Activated CD4-positive, alpha-beta memory T cell treated with anti-CD3 and anti-CD28 coated beads for 36 hours (primary cell): ENCODE measurements at regions of chr11 and their contacts with region 1.

Region 1: GRCh38 chr11:119728651-119729580 is at the start of gene NECTIN1:
- DNase-seq: peak; percentile 89
- H3K4me3 Mint-ChIP-seq: peak within 1 kb of the TSS; percentile 76
- H3K27ac Mint-ChIP-seq: peak within 1 kb of the TSS; percentile 28
- H3K4me1 Mint-ChIP-seq: peaks cover 16% of the 10 kb centered on the region
- H3K27me3 Mint-ChIP-seq: peaks cover 13% of the 10 kb centered on the region
- total RNA-seq, gene NECTIN1: 2.0 to 2.4 TPM

Region 2: DNA sequence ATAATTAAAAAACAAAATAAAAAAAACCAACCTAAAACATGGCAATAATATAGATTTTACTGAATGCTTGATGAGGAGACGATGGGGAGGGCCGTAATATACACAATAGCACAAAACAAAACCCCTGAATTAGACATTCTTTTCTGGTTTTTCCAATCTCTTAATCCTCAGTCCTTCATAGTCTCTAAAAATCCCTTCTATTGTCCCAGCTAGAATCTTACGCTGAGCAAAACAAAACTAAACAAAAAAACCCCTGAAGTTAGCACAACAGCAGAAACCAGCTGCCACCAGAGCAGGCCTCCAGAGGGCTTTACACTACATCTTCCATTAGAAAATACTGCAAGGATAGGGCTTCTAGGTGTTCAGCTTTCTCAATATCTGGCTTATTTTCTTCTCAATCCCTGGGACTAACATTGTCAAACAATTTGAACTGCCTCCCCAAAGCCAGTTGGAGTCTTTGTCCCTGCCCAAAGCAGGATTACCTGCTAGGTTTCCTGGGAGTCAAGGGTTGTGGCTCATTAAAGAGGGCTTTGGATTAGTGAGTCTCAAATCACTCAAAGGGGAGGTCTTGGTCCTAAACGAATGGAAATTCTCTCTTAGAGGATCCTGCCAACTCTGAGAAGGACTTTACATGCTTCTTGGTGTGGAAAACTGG is 396.7 kb before region 1 on chr11:
- CTCF ChIA-PET with region 1: no interaction called
- POLR2A ChIA-PET with region 1: no interaction called
- intact Hi-C with region 1: no loop called
- DNase-seq: no peak
- H3K4me3 Mint-ChIP-seq: no peak overlapping the region
- H3K27ac Mint-ChIP-seq: no peak overlapping the region
- H3K4me1 Mint-ChIP-seq: peaks cover 20% of the 10 kb centered on the region
- H3K27me3 Mint-ChIP-seq: no peaks in the 10 kb centered on the region

Region 3: GRCh38 chr11:119481021-119481666 is 247.8 kb before region 1 on chr11:
- CTCF ChIA-PET with region 1: interaction called, 9 read pairs
- POLR2A ChIA-PET with region 1: no interaction called
- intact Hi-C with region 1: loop called (anchors 5 kb)
- DNase-seq: peak; percentile 82
- H3K4me3 Mint-ChIP-seq: no peak overlapping the region
- H3K27ac Mint-ChIP-seq: no peak overlapping the region
- H3K4me1 Mint-ChIP-seq: no peaks in the 10 kb centered on the region
- H3K27me3 Mint-ChIP-seq: peaks cover 13% of the 10 kb centered on the region

Region 4: DNA sequence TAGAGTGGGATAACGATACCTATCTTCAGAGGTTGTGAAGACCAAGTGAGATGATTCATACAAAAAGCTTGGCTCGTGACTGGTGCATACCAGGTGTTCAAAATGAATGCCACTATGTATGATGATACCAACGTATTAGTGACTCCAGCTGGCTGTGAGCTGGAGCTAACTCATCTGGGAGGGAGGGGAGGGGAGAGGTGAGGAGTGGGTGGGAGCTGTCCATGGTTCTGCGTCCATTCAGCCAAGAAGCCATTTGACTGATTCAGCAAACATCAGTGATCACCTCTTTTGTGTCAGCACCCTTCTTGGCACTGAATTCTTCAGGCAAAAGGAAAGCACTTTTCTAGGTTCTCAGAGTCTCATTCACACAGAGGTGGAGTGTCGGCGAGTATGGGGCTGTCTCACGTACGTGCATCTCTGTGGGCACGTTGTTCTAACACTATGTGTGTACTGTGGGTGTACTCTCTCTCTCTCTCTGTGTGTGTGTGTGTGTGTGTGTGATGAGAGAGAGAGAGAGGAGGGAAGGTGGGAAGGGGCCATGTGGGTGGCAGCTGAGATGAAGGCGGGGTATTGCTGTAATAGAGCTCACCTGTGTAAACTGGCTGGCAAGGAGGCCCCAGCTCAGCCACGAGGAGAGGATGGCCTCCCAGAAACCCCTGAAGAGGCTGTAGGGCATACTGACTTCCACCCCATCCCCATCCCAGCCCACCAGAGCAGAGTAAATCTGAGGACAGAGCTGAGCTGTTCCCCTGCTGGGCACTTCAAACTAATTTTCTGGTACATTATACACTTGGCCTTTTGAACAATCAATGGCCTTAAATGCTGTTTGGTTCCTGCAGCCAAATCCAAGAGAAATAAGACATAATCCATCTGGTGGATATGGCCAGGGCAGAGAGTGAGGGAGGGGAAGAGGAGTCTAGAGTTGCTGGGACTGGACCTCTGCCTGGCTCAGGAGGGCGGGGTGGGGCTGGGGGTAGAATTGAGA is 209.9 kb before region 1 on chr11:
- CTCF ChIA-PET with region 1: no interaction called
- POLR2A ChIA-PET with region 1: no interaction called
- intact Hi-C with region 1: no loop called
- DNase-seq: peak; percentile 57
- H3K4me3 Mint-ChIP-seq: no peak overlapping the region
- H3K27ac Mint-ChIP-seq: no peak overlapping the region
- H3K4me1 Mint-ChIP-seq: no peaks in the 10 kb centered on the region
- H3K27me3 Mint-ChIP-seq: peaks cover 14% of the 10 kb centered on the region

Region 5: DNA sequence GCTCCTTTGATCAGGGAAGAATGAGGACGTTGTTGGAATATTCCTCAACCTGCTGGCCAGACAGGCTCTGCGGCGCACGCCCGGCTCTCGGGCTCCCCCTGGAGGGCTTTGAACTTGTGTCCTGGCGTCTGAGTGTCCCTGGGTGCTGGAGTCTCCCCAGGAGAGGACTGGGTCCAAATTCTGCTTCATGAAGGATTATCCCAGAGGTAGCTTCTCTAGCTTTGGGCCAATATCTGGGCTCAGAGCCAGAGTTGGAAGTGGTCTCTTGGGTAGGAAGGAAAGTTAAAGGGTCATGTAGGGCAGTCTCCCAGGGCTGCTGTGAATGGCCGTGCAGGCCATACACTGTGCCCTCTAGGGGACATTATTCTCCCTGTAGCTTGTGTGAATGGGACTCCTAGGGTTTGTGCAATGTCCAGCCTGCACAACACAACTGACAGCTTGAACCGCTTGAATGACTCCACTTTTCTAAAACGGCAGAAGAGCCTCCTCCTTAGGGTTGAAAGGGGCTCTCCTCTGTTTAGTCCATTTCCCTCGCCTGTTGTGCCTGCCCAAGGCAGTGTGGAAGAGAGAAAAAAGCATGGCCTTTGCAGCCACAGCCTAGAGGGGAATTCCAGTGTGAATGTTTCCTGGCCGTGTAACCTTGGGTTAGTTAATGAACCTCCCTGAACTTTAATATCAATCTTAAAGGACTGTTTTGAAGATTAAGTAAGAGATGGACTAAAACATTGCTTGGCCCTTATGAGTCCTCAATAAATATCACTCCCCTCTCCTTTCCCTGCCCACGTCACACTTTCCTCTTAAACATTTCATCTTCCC is 194.8 kb before region 1 on chr11:
- CTCF ChIA-PET with region 1: no interaction called
- POLR2A ChIA-PET with region 1: no interaction called
- intact Hi-C with region 1: no loop called
- DNase-seq: peak; percentile 71
- H3K4me3 Mint-ChIP-seq: no peak overlapping the region
- H3K27ac Mint-ChIP-seq: no peak overlapping the region
- H3K4me1 Mint-ChIP-seq: no peaks in the 10 kb centered on the region
- H3K27me3 Mint-ChIP-seq: peaks cover 15% of the 10 kb centered on the region

Region 6: GRCh38 chr11:119673759-119674336 is 55.1 kb before region 1 on chr11:
- CTCF ChIA-PET with region 1: interaction called, 22 read pairs
- POLR2A ChIA-PET with region 1: no interaction called
- intact Hi-C with region 1: loop called (anchors 1 kb)
- DNase-seq: peak; percentile 70
- H3K4me3 Mint-ChIP-seq: no peak overlapping the region
- H3K27ac Mint-ChIP-seq: no peak overlapping the region
- H3K4me1 Mint-ChIP-seq: peaks cover 7% of the 10 kb centered on the region
- H3K27me3 Mint-ChIP-seq: no peaks in the 10 kb centered on the region

Region 7: DNA sequence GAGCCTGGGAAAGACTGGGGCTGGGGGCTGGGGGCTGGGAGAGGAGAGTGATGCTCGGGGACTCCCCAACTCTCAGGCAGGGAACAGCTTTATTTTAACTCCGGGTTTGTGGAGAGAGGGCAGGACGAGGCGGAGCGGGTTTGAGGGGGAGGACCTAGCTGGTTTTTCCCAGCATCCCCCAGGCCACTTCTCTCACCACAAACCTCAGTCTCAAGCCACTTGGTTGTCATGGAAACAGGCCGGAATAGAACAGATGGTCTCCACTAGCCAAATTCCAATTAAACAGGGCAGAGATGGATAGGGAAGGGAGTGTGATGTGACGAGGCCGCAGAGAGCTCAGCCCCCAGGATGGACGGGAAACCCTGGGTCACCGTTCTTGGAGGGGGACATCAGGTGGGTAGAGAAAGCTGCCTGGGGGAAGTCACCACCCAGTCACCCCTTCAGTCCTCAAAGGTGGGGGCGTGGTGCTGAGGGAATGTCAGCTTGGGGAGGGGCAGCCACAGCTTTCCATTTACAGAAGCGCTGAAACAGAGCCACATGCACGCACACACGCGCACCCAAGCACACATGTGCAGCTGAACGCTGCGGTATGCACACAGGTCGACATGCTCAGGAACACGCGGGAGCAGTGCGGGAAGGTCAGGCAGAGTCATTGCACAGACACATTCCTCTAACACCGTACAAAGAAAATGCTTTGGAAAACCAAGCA is 19.1 kb before region 1 on chr11:
- CTCF ChIA-PET with region 1: interaction called, 12 read pairs
- POLR2A ChIA-PET with region 1: no interaction called
- intact Hi-C with region 1: no loop called
- DNase-seq: no peak
- H3K4me3 Mint-ChIP-seq: no peak overlapping the region
- H3K27ac Mint-ChIP-seq: no peak overlapping the region
- H3K4me1 Mint-ChIP-seq: peaks cover 6% of the 10 kb centered on the region
- H3K27me3 Mint-ChIP-seq: peaks cover 12% of the 10 kb centered on the region

Region 8: GRCh38 chr11:119752345-119752871 is 23.5 kb after region 1 on chr11:
- CTCF ChIA-PET with region 1: interaction called, 15 read pairs
- POLR2A ChIA-PET with region 1: no interaction called
- intact Hi-C with region 1: no loop called
- DNase-seq: no peak
- H3K4me3 Mint-ChIP-seq: no peak overlapping the region
- H3K27ac Mint-ChIP-seq: no peak overlapping the region
- H3K4me1 Mint-ChIP-seq: peaks cover 8% of the 10 kb centered on the region
- H3K27me3 Mint-ChIP-seq: peaks cover 11% of the 10 kb centered on the region